ENCODE measurements at regions of chr2 and their contacts with region 1.

Region 1: GRCh38 chr2:128425731-128426620 is 107.3 kb upstream of the HS6ST1 start:
- DNase-seq: peak; percentile 78 to 98
- H3K4me3 ChIP-seq: peak overlapping the region; percentile 36; the same call in 1 of the 2 replicates
- H3K27ac ChIP-seq: peak overlapping the region; percentile 70
- H3K4me1 ChIP-seq: peaks cover 62% of the 10 kb centered on the region
- H3K27me3 ChIP-seq: no peaks in the 10 kb centered on the region
- CTCF ChIP-seq: no peak; the same call in 1 of the 2 replicates

Region 2: GRCh38 chr2:127857265-127857808 is 568.6 kb before region 1 on chr2:
- CTCF ChIA-PET with region 1: no interaction called
- POLR2A ChIA-PET with region 1: no interaction called
- intact Hi-C with region 1: no loop called
- DNase-seq: peak in 1 of 2 experiments; percentile 11
- H3K4me3 ChIP-seq: peak overlapping the region; percentile 99
- H3K27ac ChIP-seq: peak overlapping the region; percentile 18; the same call in 1 of the 2 replicates
- H3K4me1 ChIP-seq: peaks cover 15% of the 10 kb centered on the region
- H3K27me3 ChIP-seq: no peaks in the 10 kb centered on the region
- CTCF ChIP-seq: no peak

Region 3: GRCh38 chr2:128520791-128521190 is 94.8 kb after region 1 on chr2:
- CTCF ChIA-PET with region 1: no interaction called
- POLR2A ChIA-PET with region 1: no interaction called
- intact Hi-C with region 1: loop called (anchors 5 kb)
- DNase-seq: peak; percentile 77 to 93
- H3K4me3 ChIP-seq: peak overlapping the region; percentile 10; the same call in 1 of the 2 replicates
- H3K27ac ChIP-seq: peak overlapping the region; percentile 91
- H3K4me1 ChIP-seq: peaks cover 21% of the 10 kb centered on the region
- H3K27me3 ChIP-seq: no peaks in the 10 kb centered on the region
- CTCF ChIP-seq: no peak; the same call in 1 of the 2 replicates

Measured in PC-9 (cell line).